Left ventricle myocardium superior (tissue), 1 donor: ENCODE measurements at regions of chr13 and their contacts with region 1.

Region 1: GRCh38 chr13:78299832-78300623 is 303.3 kb downstream of the POU4F1 start:
- DNase-seq: no peak
- ATAC-seq: no peak

Region 2: GRCh38 chr13:78286748-78287147 is 13.3 kb before region 1 on chr13:
- intact Hi-C with region 1: no loop called
- DNase-seq: no peak
- ATAC-seq: no peak

Region 3: DNA sequence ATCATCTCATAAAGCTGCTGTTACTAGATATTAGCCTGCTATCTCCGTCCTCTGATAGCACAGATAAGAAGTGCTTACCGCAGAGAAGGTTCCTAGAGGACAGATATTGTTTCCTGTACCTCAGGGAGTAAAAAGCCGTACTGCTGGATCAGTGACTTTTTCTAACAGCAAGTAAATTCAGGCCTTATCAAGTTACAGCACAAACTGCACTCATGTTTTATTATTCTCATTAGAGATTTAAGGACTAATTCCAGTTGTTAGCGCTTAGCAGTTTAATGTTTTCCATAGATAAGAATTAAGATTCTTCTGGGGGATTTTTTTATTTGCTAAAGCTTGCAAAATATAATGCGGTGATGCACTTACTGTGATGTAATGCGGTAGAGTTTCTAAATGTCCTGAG is 477.9 kb after region 1 on chr13:
- intact Hi-C with region 1: loop called (anchors 10 kb)
- DNase-seq: no peak
- ATAC-seq: no peak